ENCODE measurements at regions of chr10 and their contacts with region 1.

Region 1: DNA sequence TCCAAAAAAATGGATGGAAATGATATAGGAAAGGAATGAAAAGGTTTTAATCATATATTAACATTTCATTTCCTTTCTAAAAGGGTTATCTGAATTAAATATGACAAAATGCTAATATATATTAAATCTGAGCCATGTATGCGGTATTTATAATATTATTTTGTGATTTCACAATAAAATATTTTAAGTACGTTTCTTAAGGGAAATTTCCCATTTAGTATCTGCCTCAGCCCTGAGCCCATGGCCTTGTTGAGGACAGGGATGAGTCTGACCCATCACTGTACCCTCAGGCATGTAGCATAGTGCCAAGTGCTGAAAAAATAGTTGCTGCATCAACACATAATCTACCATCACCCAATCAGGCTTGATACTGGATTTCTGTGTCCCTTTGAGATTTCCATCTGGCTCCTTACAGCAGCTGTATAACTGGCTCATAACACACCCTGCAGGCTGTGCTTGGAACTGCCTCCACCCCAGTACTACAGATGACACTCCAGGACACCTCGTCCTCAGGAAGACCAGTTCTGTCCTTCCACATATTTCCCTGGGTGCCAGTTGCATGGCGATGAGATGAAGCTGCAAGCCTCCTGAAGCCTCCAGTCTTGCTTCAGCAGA is 59.4 kb upstream of the ASAH2 start:
- DNase-seq: peak; percentile 73 to 88 (median 75)
- ATAC-seq: peak; percentile 84
- H3K4me3 ChIP-seq: no peak overlapping the region
- H3K27ac ChIP-seq: peak overlapping the region; percentile 37; the same call in 2 of the 3 replicates
- H3K4me1 ChIP-seq: peaks cover 7 to 49% of the 10 kb centered on the region in 2 experiments
- H3K27me3 ChIP-seq: no peaks in the 10 kb centered on the region
- CTCF ChIP-seq: peak; percentile 78 to 93 (median 78)
- EP300 ChIP-seq: no peak
- POLR2A ChIP-seq: no peak; the same call in 1 of the 2 replicates
- RAD21 ChIP-seq: peak; percentile 39 to 75; a peak in 3 of 4 replicates

Region 2: GRCh38 chr10:50362547-50363125 is 52.0 kb after region 1 on chr10:
- CTCF ChIA-PET with region 1: no interaction called
- POLR2A ChIA-PET with region 1: no interaction called
- in situ Hi-C with region 1: no loop called
- intact Hi-C with region 1: loop called (anchors 5 kb)
- DNase-seq: no peak
- ATAC-seq: no peak
- H3K4me3 ChIP-seq: no peak overlapping the region
- H3K27ac ChIP-seq: peak overlapping the region; percentile 36; the same call in 2 of the 3 replicates
- H3K4me1 ChIP-seq: peaks cover 10 to 56% of the 10 kb centered on the region in 2 experiments
- H3K27me3 ChIP-seq: no peaks in the 10 kb centered on the region
- CTCF ChIP-seq: no peak
- EP300 ChIP-seq: no peak
- POLR2A ChIP-seq: no peak
- RAD21 ChIP-seq: no peak

Region 3: GRCh38 chr10:50552771-50553535 is 242.3 kb after region 1 on chr10:
- CTCF ChIA-PET with region 1: no interaction called
- POLR2A ChIA-PET with region 1: no interaction called
- in situ Hi-C with region 1: no loop called
- intact Hi-C with region 1: loop called (anchors 5 kb)
- DNase-seq: peak in 2 of 4 experiments; percentile 41 to 77
- ATAC-seq: peak; percentile 43
- H3K4me3 ChIP-seq: no peak overlapping the region; the same call in 1 of the 2 replicates
- H3K27ac ChIP-seq: peak overlapping the region; percentile 23; the same call in 1 of the 3 replicates
- H3K4me1 ChIP-seq: peaks cover 34 to 63% of the 10 kb centered on the region in 2 experiments
- H3K27me3 ChIP-seq: no peaks in the 10 kb centered on the region
- CTCF ChIP-seq: peak; percentile 57 to 66 (median 60)
- EP300 ChIP-seq: peak; percentile 39; the same call in 1 of the 2 replicates
- POLR2A ChIP-seq: no peak
- RAD21 ChIP-seq: peak; percentile 57 to 68; a peak in 3 of 4 replicates

Measured in K562 (cell line).